Endothelial cell of umbilical vein (primary cell): ENCODE measurements at regions of chr18 and their contacts with region 1.

Region 1: GRCh38 chr18:23231340-23232021 is 96.2 kb downstream of the CABLES1 start:
- DNase-seq: peak; percentile 97
- H3K4me3 ChIP-seq: no peak overlapping the region
- H3K27ac ChIP-seq: peak overlapping the region; percentile 90
- H3K4me1 ChIP-seq: peaks cover 50% of the 10 kb centered on the region
- H3K27me3 ChIP-seq: no peaks in the 10 kb centered on the region
- CTCF ChIP-seq: no peak
- POLR2A ChIP-seq: peak; percentile 27

Region 2: GRCh38 chr18:23032030-23032582 is 199.4 kb before region 1 on chr18:
- CTCF ChIA-PET with region 1: interaction called, 5 read pairs
- POLR2A ChIA-PET with region 1: no interaction called
- dilution Hi-C with region 1: no loop called
- intact Hi-C with region 1: loop called (anchors 10 kb)
- DNase-seq: peak; percentile 45
- H3K4me3 ChIP-seq: no peak overlapping the region
- H3K27ac ChIP-seq: peak overlapping the region; percentile 20
- H3K4me1 ChIP-seq: peaks cover 10% of the 10 kb centered on the region
- H3K27me3 ChIP-seq: no peaks in the 10 kb centered on the region
- CTCF ChIP-seq: no peak
- POLR2A ChIP-seq: no peak

Region 3: DNA sequence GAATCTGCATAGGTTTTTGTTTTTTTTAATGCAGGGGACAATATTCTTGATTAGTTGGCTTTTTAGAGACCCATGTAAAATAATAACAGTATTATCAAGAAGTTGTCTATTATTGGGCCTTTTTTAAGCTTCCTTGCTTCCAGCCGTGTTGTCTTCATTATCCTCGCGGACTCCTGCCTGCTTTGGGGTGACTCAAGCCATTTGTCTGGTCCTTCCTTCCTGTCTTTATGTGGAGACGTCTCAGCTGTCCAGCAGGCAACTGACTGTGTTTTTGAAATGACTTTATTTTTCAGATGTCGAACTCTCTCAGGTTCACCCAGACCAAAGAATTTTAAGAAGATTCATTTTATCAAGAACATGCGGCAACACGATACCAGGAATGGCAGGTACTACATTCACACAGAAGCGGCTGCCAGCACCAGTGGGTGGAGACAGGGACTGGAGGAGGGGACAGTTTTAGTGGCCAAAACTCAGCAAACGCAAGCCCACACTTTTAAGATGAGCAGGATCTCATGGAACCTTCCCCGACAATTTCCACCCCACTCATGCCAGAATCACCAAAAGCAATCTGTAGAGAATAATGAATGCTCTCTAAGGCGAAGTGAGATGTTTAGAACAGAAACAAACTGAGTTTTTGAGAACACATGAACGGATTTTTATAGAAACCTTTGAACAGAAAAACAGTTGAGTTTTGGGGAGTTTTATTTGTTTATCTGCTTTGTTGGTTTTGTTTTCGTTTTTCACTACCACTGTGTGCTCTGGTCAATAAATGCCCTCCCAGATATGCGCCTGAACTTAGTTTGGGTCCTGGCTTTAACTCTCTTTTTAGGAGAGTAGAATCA is 37.1 kb before region 1 on chr18:
- CTCF ChIA-PET with region 1: interaction called, 3 read pairs
- POLR2A ChIA-PET with region 1: no interaction called
- dilution Hi-C with region 1: no loop called
- intact Hi-C with region 1: loop called (anchors 1 kb)
- DNase-seq: peak; percentile 44
- H3K4me3 ChIP-seq: no peak overlapping the region
- H3K27ac ChIP-seq: peak overlapping the region; percentile 49
- H3K4me1 ChIP-seq: peaks cover 35% of the 10 kb centered on the region
- H3K27me3 ChIP-seq: no peaks in the 10 kb centered on the region
- CTCF ChIP-seq: no peak
- POLR2A ChIP-seq: no peak

Region 4: DNA sequence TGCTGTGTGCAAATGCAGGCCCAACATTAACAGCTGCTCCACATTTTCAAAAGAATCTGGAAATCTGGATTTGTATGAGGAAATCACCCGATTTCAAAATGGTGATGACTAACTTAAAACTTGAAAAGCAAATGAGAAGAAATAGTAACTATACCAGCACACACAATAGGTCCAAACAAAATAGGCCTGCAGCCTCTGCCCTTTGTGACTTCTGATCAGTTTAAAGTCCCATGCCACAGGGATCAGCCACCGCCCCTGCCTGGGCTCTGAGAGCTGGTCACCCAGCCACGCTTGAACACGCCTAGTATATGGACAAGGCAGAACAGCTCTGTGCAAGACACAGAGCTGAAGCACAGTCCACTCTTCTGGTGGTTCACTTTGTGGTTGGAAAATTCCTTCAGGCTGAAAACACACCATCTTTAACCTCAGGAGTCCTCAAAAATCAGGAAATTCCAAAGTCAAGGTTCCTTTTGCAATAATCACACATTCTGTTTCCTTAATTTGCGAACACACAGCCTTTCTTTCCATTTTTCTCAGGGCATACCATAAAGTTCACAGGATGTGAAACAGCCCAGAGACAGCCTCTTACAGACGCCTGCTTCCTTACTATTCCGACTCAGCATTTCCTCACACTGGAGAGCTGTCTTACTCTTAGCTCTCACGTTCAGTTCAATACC is 71.5 kb after region 1 on chr18:
- CTCF ChIA-PET with region 1: interaction called, 4 read pairs
- POLR2A ChIA-PET with region 1: no interaction called
- dilution Hi-C with region 1: no loop called
- intact Hi-C with region 1: loop called (anchors 1 kb)
- DNase-seq: peak; percentile 98
- H3K4me3 ChIP-seq: no peak overlapping the region
- H3K27ac ChIP-seq: peak overlapping the region; percentile 88
- H3K4me1 ChIP-seq: peaks cover 44% of the 10 kb centered on the region
- H3K27me3 ChIP-seq: no peaks in the 10 kb centered on the region
- CTCF ChIP-seq: no peak
- POLR2A ChIP-seq: peak; percentile 75

Region 5: GRCh38 chr18:23401400-23402347 is 170.2 kb after region 1 on chr18:
- CTCF ChIA-PET with region 1: no interaction called
- POLR2A ChIA-PET with region 1: no interaction called
- dilution Hi-C with region 1: no loop called
- intact Hi-C with region 1: loop called (anchors 1 kb)
- DNase-seq: peak; percentile 97
- H3K4me3 ChIP-seq: no peak overlapping the region
- H3K27ac ChIP-seq: peak overlapping the region; percentile 92
- H3K4me1 ChIP-seq: peaks cover 22% of the 10 kb centered on the region
- H3K27me3 ChIP-seq: no peaks in the 10 kb centered on the region
- CTCF ChIP-seq: no peak
- POLR2A ChIP-seq: peak; percentile 80

Region 6: DNA sequence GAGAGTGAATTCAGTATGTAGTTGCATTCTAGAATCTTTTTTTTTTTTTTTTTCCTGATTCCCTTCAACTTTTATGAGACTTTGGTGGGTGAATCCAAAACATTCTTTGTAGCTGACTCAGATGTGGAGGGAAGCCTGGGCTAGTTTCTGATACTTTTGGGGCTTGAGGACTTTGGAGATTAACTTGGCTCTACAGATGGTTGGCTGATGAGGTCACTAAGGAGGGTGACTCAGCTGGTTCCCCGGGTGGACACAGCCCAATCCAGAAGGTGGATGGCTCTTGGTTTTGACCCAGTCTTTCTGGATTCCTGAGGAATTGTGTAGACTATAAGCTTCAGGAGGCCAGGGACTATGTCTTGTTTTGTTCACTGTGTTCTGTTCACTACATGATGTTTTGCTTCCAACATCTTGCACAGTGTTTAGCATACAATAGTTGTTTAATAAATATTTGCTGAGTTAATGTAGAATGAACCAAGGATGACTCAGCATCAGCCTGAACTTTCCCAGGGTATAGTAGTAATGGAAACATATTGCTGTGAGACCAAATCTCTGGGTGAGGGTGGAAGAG is 488.2 kb after region 1 on chr18:
- CTCF ChIA-PET with region 1: no interaction called
- POLR2A ChIA-PET with region 1: no interaction called
- dilution Hi-C with region 1: no loop called
- intact Hi-C with region 1: no loop called
- DNase-seq: peak; percentile 88
- H3K4me3 ChIP-seq: no peak overlapping the region
- H3K27ac ChIP-seq: peak overlapping the region; percentile 84
- H3K4me1 ChIP-seq: peaks cover 19% of the 10 kb centered on the region
- H3K27me3 ChIP-seq: no peaks in the 10 kb centered on the region
- CTCF ChIP-seq: no peak
- POLR2A ChIP-seq: no peak